ENCODE measurements at regions of chr9 and their contacts with region 1.

Region 1: GRCh38 chr9:5832543-5833529 is at the start of gene ERMP1:
- DNase-seq: peak; percentile 43
- H3K4me3 ChIP-seq: peak within 1 kb of the TSS; percentile 69
- H3K27ac ChIP-seq: no peak within 1 kb of the TSS
- H3K27me3 ChIP-seq: peaks cover 13% of the 10 kb centered on the region
- CTCF ChIP-seq: peak; percentile 77
- polyA plus RNA-seq, gene ERMP1: 5.5 and 6.1 TPM in 2 replicates

Region 2: DNA sequence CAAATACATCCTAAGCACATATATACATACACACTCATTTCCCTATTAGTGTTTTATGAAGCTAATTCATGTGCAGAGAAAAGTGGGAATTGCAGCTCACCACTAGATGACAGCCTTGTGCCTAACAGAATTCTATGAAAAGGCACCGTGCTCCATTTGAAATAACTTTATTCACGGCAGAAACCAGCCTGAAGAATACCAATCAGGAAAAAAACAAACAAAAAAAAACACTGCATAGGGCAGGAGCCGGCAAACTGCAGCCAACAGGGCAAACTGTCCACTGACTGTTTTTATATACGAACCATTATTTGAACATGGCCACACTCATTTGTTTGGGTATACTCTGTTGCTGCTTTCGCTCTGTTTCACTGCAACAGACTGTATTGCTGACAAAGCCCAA is 33.5 kb before region 1 on chr9:
- CTCF ChIA-PET with region 1: interaction called, 11 read pairs
- POLR2A ChIA-PET with region 1: no interaction called
- DNase-seq: peak; percentile 18
- H3K4me3 ChIP-seq: no peak overlapping the region
- H3K27ac ChIP-seq: no peak overlapping the region
- H3K27me3 ChIP-seq: no peaks in the 10 kb centered on the region
- CTCF ChIP-seq: peak; percentile 89

Region 3: GRCh38 chr9:5817869-5818268 is 15.0 kb before region 1 on chr9:
- CTCF ChIA-PET with region 1: interaction called, 50 read pairs
- POLR2A ChIA-PET with region 1: no interaction called
- DNase-seq: no peak
- H3K4me3 ChIP-seq: no peak overlapping the region
- H3K27ac ChIP-seq: no peak overlapping the region
- H3K27me3 ChIP-seq: no peaks in the 10 kb centered on the region
- CTCF ChIP-seq: no peak

Region 4: DNA sequence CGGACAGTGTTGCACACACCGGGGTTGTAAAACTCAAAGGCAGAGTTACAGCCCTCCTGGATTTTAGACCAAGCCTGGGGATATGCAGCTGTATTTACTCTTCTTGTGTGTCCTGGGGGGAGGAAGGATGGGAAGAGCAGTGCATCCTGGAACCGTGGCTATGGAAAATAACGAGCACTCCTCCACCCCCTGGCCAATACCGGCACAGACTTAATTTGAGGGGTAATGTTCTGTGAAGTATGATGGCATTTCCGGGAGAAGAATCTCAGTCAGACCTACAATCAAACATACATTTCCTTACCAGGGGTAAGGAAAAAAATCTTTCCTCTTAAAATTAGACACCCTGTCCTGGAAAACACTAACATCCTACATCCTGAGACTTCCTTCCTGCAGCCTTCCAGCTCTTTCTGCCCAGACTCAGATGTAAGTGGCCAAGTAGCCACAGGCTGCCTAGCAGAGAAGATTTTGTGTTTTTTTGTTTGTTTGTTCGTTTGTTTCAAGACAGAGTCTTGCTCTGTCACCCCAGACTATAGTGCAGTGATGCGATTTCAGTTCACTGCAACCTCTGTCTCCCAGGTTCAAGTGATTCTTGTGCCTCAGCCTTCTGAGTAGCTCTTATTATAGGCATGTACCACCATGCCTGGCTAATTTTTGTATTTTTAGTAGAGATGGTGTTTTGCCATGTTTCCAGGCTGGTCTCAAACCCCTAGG is 11.1 kb after region 1 on chr9:
- CTCF ChIA-PET with region 1: interaction called, 27 read pairs
- POLR2A ChIA-PET with region 1: no interaction called
- DNase-seq: no peak
- H3K4me3 ChIP-seq: no peak overlapping the region
- H3K27ac ChIP-seq: no peak overlapping the region
- H3K27me3 ChIP-seq: peaks cover 13% of the 10 kb centered on the region
- CTCF ChIP-seq: no peak